Activated B cell treated with CpG ODN at 0.5 μM for 24 hours (primary cell): ENCODE measurements at regions of chrX and their contacts with region 1.

Region 1: GRCh38 chrX:47217642-47218279 is 720 bp upstream of the CDK16 start:
- DNase-seq: peak; percentile 84
- ATAC-seq: peak; percentile 80
- H3K4me3 Mint-ChIP-seq: peak overlapping the region; percentile 92
- H3K27ac Mint-ChIP-seq: peak overlapping the region; percentile 99
- H3K4me1 Mint-ChIP-seq: peaks cover 40% of the 10 kb centered on the region
- H3K27me3 Mint-ChIP-seq: no peaks in the 10 kb centered on the region
- CTCF ChIP-seq: no peak

Region 2: DNA sequence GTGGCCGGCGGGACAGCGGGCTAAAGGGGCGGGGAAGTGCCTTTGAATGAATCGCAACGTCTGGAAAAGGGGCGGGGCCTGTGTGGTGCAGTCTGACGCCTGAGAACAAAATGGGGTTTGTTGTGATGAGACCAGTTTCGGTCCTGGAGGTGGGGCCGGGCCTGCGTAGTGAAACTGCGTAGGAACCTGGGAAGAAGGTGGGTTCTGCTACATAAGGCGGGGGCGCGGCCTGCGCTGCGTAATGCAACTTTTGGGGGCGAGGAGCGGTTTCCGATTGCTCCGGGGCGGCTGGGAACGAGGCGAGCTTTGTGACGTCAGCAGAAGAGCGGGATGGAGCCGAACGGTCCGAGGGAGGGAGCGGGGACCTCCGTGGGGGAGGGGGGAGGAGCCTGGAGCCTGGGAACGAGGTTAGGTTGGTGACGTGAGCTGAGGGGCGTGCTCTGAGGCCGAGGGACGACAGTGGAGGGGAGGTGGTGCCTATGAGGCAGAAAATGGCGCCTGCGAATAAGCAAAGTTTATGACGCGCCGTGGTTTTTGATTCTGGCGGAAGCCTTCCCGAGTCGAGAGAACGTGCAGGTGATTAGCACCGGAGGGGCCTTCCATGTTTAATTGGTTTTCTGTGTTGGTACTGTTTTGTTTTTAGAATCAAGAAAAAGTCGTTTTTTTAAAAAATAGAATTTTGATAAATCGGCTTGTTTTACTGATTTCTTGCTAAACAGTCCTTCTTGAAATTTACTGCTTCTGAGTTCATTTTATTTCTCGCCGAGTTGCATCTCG is 15.8 kb after region 1 on chrX:
- CTCF ChIA-PET with region 1: no interaction called
- POLR2A ChIA-PET with region 1: interaction called, 53 read pairs
- intact Hi-C with region 1: loop called (anchors 1 kb)
- DNase-seq: peak; percentile 74
- ATAC-seq: peak; percentile 90
- H3K4me3 Mint-ChIP-seq: peak overlapping the region; percentile 92
- H3K27ac Mint-ChIP-seq: peak overlapping the region; percentile 98
- H3K4me1 Mint-ChIP-seq: peaks cover 15% of the 10 kb centered on the region
- H3K27me3 Mint-ChIP-seq: no peaks in the 10 kb centered on the region
- CTCF ChIP-seq: no peak

Region 3: GRCh38 chrX:47446431-47446830 is 228.7 kb after region 1 on chrX:
- CTCF ChIA-PET with region 1: no interaction called
- POLR2A ChIA-PET with region 1: no interaction called
- intact Hi-C with region 1: no loop called
- DNase-seq: no peak
- ATAC-seq: peak; percentile 18
- H3K4me3 Mint-ChIP-seq: no peak overlapping the region
- H3K27ac Mint-ChIP-seq: peak overlapping the region; percentile 56
- H3K4me1 Mint-ChIP-seq: peaks cover 11% of the 10 kb centered on the region
- H3K27me3 Mint-ChIP-seq: no peaks in the 10 kb centered on the region
- CTCF ChIP-seq: no peak